ENCODE measurements at regions of chr10 and their contacts with region 1.

Region 1: GRCh38 chr10:93554760-93555432 is 11.6 kb upstream of the FFAR4 start:
- DNase-seq: peak; percentile 53
- ATAC-seq: peak; percentile 49
- H3K4me3 ChIP-seq: no peak overlapping the region
- H3K4me3 Mint-ChIP-seq: no peak overlapping the region
- H3K27ac ChIP-seq: no peak overlapping the region
- H3K27ac Mint-ChIP-seq: no peak overlapping the region
- H3K4me1 ChIP-seq: no peaks in the 10 kb centered on the region
- H3K4me1 Mint-ChIP-seq: peaks cover 2% of the 10 kb centered on the region
- H3K27me3 ChIP-seq: peaks cover 0 to 3% (median 0%) of the 10 kb centered on the region in 4 experiments
- H3K27me3 Mint-ChIP-seq: peaks cover 10% of the 10 kb centered on the region
- CTCF ChIP-seq: peak; percentile 74

Region 2: GRCh38 chr10:93816123-93816747 is 261.3 kb after region 1 on chr10:
- CTCF ChIA-PET with region 1: interaction called, 20 read pairs
- POLR2A ChIA-PET with region 1: no interaction called
- intact Hi-C with region 1: no loop called
- DNase-seq: peak; percentile 51
- ATAC-seq: no peak
- H3K4me3 ChIP-seq: no peak overlapping the region
- H3K4me3 Mint-ChIP-seq: no peak overlapping the region
- H3K27ac ChIP-seq: no peak overlapping the region
- H3K27ac Mint-ChIP-seq: no peak overlapping the region
- H3K4me1 ChIP-seq: no peaks in the 10 kb centered on the region
- H3K4me1 Mint-ChIP-seq: no peaks in the 10 kb centered on the region
- H3K27me3 ChIP-seq: peaks cover 0 to 21% (median 5%) of the 10 kb centered on the region in 4 experiments
- H3K27me3 Mint-ChIP-seq: peaks cover 63% of the 10 kb centered on the region
- CTCF ChIP-seq: peak; percentile 67

Region 3: DNA sequence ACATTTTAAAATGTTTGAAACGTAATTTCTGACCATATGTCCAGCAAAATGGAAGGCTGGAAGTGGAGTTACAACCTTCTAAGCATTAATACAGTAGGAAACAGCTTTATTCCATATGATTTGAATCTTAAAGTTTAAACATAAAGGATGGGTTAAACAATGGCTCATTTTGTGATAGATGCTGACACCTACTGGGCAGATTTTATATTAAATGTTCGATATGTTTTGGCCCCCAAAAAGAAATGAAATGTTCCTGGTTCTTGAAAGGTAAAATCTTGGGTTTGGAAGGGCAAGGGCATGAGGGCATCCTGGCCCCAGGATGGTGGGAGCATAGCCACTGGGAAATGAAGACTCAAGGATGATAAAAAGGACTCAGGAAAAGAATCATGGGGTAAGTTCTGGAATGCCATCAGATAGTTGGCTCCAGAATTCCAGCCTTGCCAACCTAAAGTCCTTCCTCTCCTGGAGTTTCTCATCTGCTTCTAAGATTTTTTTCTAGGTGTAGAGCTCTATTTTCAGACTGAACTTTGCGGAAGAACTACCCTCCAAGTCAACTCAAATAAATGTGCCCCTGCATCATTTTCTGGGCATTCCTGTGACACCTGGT is 304.3 kb after region 1 on chr10:
- CTCF ChIA-PET with region 1: interaction called, 64 read pairs
- POLR2A ChIA-PET with region 1: no interaction called
- intact Hi-C with region 1: no loop called
- DNase-seq: peak; percentile 18
- ATAC-seq: no peak
- H3K4me3 ChIP-seq: no peak overlapping the region
- H3K4me3 Mint-ChIP-seq: no peak overlapping the region
- H3K27ac ChIP-seq: no peak overlapping the region
- H3K27ac Mint-ChIP-seq: no peak overlapping the region
- H3K4me1 ChIP-seq: no peaks in the 10 kb centered on the region
- H3K4me1 Mint-ChIP-seq: no peaks in the 10 kb centered on the region
- H3K27me3 ChIP-seq: no peaks in the 10 kb centered on the region
- H3K27me3 Mint-ChIP-seq: peaks cover 9% of the 10 kb centered on the region
- CTCF ChIP-seq: peak; percentile 67

Region 4: GRCh38 chr10:94645285-94645684 is 1090.4 kb after region 1 on chr10:
- CTCF ChIA-PET with region 1: no interaction called
- POLR2A ChIA-PET with region 1: no interaction called
- intact Hi-C with region 1: no loop called
- DNase-seq: no peak
- ATAC-seq: no peak
- H3K4me3 ChIP-seq: no peak overlapping the region
- H3K4me3 Mint-ChIP-seq: no peak overlapping the region
- H3K27ac ChIP-seq: no peak overlapping the region
- H3K27ac Mint-ChIP-seq: no peak overlapping the region
- H3K4me1 ChIP-seq: no peaks in the 10 kb centered on the region
- H3K4me1 Mint-ChIP-seq: no peaks in the 10 kb centered on the region
- H3K27me3 ChIP-seq: no peaks in the 10 kb centered on the region
- H3K27me3 Mint-ChIP-seq: peaks cover under 1% of the 10 kb centered on the region
- CTCF ChIP-seq: no peak